Mammary epithelial cell (primary cell): ENCODE measurements at regions of chr15 and their contacts with region 1.

Region 1: GRCh38 chr15:42800731-42801474 is 64.0 kb upstream of the CDAN1 start:
- DNase-seq: no peak
- H3K4me3 ChIP-seq: no peak overlapping the region
- H3K27ac ChIP-seq: no peak overlapping the region
- H3K4me1 ChIP-seq: peaks cover 5% of the 10 kb centered on the region
- H3K27me3 ChIP-seq: no peaks in the 10 kb centered on the region
- CTCF ChIP-seq: peak in 1 of 2 donors; percentile 7

Region 2: DNA sequence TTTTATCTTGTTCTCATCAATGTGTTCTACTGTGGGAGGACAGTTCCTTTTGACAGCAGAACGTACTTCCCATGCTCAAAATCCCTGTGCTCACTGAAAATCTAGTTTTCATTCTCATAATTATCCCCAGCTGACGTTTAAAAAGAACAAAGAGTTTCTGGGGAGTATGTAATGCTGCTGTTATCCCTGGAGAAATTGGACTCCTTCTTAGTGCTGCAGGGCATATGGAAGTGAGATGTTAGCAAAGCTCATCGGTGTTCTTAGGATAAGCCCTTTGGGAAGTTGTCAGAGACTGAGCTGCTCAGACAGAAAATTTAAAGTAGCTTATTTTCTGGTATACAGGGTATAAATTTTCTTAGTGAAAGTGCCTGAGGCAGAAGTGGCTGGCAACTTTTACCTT is 130.5 kb before region 1 on chr15:
- CTCF ChIA-PET with region 1: no interaction called
- dilution Hi-C with region 1: no loop called
- in situ Hi-C with region 1: no loop called
- intact Hi-C with region 1: no loop called
- DNase-seq: no peak
- H3K4me3 ChIP-seq: no peak overlapping the region
- H3K27ac ChIP-seq: no peak overlapping the region
- H3K4me1 ChIP-seq: peaks cover 12% of the 10 kb centered on the region
- H3K27me3 ChIP-seq: no peaks in the 10 kb centered on the region
- CTCF ChIP-seq: no peak

Region 3: GRCh38 chr15:42845581-42845980 is 44.7 kb after region 1 on chr15:
- CTCF ChIA-PET with region 1: no interaction called
- dilution Hi-C with region 1: loop called (anchors 5 kb)
- in situ Hi-C with region 1: no loop called
- intact Hi-C with region 1: no loop called
- DNase-seq: peak; percentile 73
- H3K4me3 ChIP-seq: no peak overlapping the region
- H3K27ac ChIP-seq: no peak overlapping the region
- H3K4me1 ChIP-seq: no peaks in the 10 kb centered on the region
- H3K27me3 ChIP-seq: no peaks in the 10 kb centered on the region
- CTCF ChIP-seq: no peak

Region 4: GRCh38 chr15:42933886-42934667 is 133.2 kb after region 1 on chr15:
- CTCF ChIA-PET with region 1: no interaction called
- dilution Hi-C with region 1: no loop called
- in situ Hi-C with region 1: loop called (anchors 5 to 10 kb)
- intact Hi-C with region 1: no loop called
- DNase-seq: peak; percentile 20
- H3K4me3 ChIP-seq: no peak overlapping the region
- H3K27ac ChIP-seq: no peak overlapping the region
- H3K4me1 ChIP-seq: peaks cover 10% of the 10 kb centered on the region
- H3K27me3 ChIP-seq: no peaks in the 10 kb centered on the region
- CTCF ChIP-seq: no peak